Aorta (tissue), 5 donors: ENCODE measurements at regions of chr7 and their contacts with region 1.

Region 1: DNA sequence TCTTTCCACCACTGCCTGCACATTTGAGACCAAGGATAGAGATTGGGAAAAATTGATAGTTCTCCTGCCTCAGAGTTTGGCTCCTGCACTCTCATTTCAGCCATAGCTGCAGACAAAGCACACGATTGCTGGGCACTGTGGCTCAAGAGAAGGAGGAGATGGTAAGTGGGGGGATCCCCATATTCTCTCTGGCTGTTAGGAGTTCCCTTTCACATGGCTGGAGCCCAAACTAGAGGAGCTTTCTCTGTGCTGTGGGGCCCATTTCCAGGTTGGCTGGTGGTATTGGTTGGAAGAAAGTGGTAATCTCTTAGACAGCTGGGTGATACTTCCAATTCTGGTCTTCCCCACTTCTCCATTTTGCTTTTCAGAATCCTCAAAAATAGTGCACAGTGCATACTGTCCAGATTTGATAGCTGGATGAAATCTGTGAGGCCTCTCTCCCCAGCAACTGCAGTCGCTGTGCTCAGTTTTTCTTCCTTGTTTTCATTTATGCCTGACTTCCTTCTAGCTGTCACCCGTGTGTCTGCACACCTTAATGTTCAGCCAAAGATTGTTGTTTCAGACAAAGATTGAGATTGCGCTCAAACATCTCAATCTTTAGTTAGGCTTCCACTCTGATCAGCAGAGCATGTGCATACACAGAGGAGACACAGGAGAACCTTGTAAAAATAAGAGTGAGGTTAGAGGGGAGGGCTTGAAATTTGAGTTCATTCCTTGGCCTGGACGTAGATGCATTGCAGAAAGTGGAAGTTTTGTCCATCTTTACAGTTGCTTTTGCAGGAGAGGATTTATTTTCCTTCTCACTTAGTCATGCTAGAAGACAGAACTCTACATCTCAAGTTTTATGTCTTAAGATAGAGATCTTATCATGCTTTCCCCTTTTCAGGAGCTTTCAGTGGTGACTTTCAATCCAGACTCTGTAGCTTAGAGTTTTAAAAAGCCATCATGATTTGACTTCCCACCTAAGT is 28.6 kb downstream of the RABGEF1 start:
- DNase-seq: no peak
- ATAC-seq: no peak
- H3K4me3 ChIP-seq: no peak overlapping the region
- H3K27ac ChIP-seq: no peak overlapping the region
- H3K4me1 ChIP-seq: peaks cover 0 to 3% of the 10 kb centered on the region in 2 donors
- H3K27me3 ChIP-seq: no peaks in the 10 kb centered on the region

Region 2: GRCh38 chr7:66557608-66558143 is 211.5 kb before region 1 on chr7:
- intact Hi-C with region 1: loop called in 1 of 2 experiments (anchors 10 kb)
- DNase-seq: peak; percentile 79 to 93
- ATAC-seq: peak; percentile 83
- H3K4me3 ChIP-seq: no peak overlapping the region
- H3K27ac ChIP-seq: no peak overlapping the region
- H3K4me1 ChIP-seq: no peaks in the 10 kb centered on the region
- H3K27me3 ChIP-seq: no peaks in the 10 kb centered on the region

Region 3: GRCh38 chr7:66869660-66870450 is 100.7 kb after region 1 on chr7:
- intact Hi-C with region 1: no loop called
- DNase-seq: no peak
- ATAC-seq: no peak
- H3K4me3 ChIP-seq: no peak overlapping the region
- H3K27ac ChIP-seq: no peak overlapping the region
- H3K4me1 ChIP-seq: no peaks in the 10 kb centered on the region
- H3K27me3 ChIP-seq: no peaks in the 10 kb centered on the region